ENCODE measurements at regions of chr9 and their contacts with region 1.

Region 1: DNA sequence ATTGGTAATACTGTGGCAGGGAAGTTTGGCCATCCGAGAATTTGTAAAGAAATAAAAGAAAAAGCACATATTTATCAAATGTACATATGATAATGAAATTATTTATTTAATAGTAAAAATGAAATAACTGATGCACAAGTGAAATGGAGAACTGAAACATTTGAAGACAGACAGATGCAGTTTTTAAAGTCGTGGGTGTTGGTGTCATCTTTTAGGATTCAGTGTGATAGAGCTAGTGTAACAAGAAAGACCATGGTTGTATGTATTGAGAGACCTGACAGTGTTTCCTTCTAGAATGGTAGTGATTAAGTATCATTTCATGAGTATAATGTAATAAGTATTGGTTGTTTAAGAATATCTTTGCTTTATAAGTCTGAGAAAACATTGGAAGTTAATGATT is 2.4 kb downstream of the SEC61B start:
- DNase-seq: no peak
- ATAC-seq: no peak

Region 2: GRCh38 chr9:98614941-98615340 is 609.5 kb before region 1 on chr9:
- intact Hi-C with region 1: no loop called
- DNase-seq: no peak
- ATAC-seq: no peak

Region 3: DNA sequence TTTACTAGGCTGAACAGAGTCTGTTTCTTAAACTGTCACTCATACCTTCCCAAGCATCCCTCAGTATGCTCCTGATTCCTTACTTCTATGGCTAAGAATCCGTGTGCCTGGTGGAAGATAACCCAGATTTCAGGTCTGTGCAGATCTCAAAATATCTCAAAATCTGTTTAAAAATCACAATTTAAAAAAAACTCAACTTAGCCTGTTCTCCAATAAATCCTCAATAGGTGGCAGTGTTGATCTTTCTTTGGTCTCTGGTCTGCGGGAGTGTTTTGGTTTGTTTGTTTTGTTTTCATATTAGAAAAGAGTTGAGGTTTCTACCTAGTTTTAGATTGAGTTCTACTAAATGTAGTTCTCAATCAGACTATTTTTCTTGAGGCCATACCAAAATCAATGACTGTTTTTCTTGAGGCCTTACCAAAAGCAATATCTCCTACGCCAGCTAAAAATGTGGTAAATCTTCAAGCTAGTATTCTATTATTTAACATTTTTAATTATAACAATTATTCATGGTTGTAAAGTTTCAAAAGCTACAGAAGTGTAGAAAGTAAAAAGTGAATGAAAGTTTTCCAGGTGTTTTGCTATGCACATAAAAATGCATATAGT is 61.6 kb before region 1 on chr9:
- intact Hi-C with region 1: no loop called
- DNase-seq: no peak
- ATAC-seq: peak; percentile 75

Region 4: DNA sequence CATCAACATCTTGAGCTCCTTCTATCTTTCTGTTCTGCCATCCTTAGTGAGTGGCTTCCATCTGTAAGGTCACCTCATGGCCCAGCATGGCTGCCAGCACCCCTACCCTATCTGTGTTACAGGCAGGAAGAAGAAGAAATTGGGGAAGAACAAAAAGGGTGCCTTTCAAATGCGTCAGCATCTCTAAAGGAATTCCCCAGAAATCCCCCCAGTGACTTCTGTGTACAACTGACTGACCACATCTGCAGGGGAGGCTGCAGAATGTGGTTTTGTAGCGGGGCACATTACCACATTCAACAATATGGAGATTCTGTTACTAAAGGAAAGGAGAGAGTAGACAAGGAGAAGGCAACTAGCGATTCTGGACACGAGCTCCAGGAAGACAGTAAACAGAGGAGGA is 42.8 kb before region 1 on chr9:
- intact Hi-C with region 1: loop called (anchors 1 kb)
- DNase-seq: no peak
- ATAC-seq: no peak

Measured in sciatic nerve (tissue), 2 donors.